ENCODE measurements at regions of chr2 and their contacts with region 1.

Region 1: DNA sequence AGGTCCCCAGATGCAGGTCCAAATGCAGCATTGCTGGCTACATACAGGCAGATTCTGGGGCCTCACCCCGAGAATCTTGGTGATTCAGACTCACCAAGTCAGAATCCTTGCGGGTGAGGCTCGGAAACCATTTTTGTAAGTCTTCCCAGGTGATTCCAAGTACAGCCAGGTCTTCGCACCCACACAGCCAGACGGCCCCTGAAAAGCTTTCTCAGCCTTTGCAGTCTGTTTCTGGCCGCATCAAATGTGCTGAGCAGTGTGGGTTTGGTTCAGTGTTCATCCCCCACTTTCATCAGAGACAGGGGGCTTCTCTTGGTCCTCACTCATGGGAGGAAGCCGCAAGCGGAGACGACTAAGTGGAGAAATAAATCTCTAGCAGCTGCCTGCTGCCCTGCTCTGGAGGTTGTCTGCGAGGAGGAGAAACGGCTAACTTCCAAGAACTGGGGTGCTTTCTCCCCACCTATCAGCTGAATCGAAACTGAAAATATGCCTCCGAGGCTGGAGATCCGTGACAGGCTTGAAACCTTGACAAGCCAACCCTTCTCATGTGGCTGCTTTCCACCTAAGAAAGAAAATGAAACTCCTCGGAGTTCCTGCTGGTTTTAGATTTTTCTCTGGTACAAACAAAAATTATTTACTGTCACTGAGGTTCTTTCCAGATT is 8.9 kb upstream of the TMEM185B start:
- DNase-seq: peak; percentile 84
- H3K4me3 Mint-ChIP-seq: peak overlapping the region; percentile 96
- H3K27ac Mint-ChIP-seq: peak overlapping the region; percentile 99
- H3K4me1 Mint-ChIP-seq: peaks cover 57% of the 10 kb centered on the region
- H3K27me3 Mint-ChIP-seq: no peaks in the 10 kb centered on the region

Region 2: DNA sequence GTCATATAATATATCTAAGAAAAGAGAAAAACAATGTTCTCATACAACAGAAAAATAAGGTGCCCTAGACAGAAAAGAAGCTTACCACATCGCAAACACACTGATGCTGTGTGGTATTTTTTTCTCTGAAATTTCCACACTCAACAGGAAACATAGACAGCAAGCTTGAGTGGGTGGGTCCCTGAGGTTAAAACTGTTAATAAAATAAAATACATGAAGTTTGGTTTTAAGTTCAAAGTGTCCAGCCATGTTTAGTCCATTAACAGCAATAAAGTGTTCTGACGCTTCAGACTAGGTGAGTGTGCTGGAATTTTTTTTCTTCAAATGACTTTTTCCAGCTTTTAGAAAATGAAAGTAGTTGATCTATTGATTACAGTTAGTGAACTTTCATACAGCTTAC is 302.6 kb before region 1 on chr2:
- CTCF ChIA-PET with region 1: no interaction called
- POLR2A ChIA-PET with region 1: interaction called, 12 read pairs
- DNase-seq: peak; percentile 46
- H3K4me3 Mint-ChIP-seq: peak overlapping the region; percentile 81
- H3K27ac Mint-ChIP-seq: peak overlapping the region; percentile 92
- H3K4me1 Mint-ChIP-seq: peaks cover 49% of the 10 kb centered on the region
- H3K27me3 Mint-ChIP-seq: no peaks in the 10 kb centered on the region

Region 3: DNA sequence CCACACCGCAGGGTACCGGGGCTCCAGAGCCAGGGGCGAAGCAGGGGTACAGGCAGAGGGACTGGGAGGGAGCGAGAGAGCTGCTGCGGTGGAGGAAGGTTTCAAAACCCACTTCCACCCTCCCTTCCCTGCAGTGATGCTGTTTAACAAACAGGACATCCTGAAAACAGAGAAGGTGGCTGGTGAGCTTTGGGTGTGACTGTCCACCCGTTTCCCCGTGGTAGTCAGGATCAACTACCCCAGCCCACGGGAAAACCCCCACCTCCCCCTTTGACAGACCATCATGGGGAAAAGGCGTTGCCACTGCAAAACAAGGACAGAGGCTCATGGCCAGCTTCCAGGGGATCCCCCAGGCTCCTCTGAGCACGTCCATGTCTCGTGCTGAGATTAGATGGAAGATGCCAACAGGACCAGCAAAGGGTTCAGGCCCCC is 21.8 kb before region 1 on chr2:
- CTCF ChIA-PET with region 1: interaction called, 3 read pairs
- POLR2A ChIA-PET with region 1: interaction called, 10 read pairs
- DNase-seq: peak; percentile 41
- H3K4me3 Mint-ChIP-seq: no peak overlapping the region
- H3K27ac Mint-ChIP-seq: peak overlapping the region; percentile 85
- H3K4me1 Mint-ChIP-seq: peaks cover 17% of the 10 kb centered on the region
- H3K27me3 Mint-ChIP-seq: no peaks in the 10 kb centered on the region

Region 4: DNA sequence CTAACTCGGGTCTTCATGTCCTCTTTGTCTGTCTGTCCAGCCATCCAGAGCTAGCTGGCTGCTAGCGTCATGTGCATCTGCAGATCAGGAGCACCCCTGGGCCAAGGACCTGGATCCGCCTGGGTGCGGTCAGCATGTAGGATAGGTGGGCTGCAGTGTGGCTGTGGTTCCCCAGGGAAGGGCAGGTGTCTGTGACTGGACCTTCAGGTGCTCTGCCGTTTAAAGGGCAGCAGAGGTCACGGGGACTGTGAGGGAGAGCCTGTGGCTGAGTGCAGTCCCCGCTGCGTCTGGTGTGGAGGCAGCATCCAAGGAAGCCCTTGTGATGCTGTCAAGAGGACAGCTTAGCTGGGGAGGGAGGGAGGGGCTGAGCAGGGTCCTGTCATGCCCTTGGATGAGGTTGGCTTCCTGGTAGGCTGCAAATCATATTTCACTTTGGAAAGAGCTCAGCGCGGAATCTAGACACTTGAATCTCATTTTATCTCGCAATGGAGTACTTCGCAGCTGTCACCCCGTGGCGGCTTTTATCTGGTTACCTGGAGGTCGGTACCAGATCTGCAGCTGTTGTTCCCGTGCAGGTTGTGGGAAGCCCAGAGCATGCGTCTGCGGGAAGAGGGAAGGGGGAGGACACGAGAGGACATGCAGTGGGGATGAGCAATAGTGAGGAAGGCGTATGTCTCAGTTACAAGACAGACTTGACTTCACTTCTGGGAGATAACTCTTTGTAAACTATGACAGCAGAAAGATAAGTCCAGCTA is 14.6 kb after region 1 on chr2:
- CTCF ChIA-PET with region 1: interaction called, 4 read pairs
- POLR2A ChIA-PET with region 1: interaction called, 45 read pairs
- DNase-seq: no peak
- H3K4me3 Mint-ChIP-seq: no peak overlapping the region
- H3K27ac Mint-ChIP-seq: no peak overlapping the region
- H3K4me1 Mint-ChIP-seq: peaks cover 20% of the 10 kb centered on the region
- H3K27me3 Mint-ChIP-seq: peaks cover 13% of the 10 kb centered on the region

Region 5: GRCh38 chr2:120252225-120253021 is 20.3 kb after region 1 on chr2 and contains the start of gene RALB:
- CTCF ChIA-PET with region 1: interaction called, 4 read pairs
- POLR2A ChIA-PET with region 1: interaction called, 45 read pairs
- DNase-seq: peak; percentile 99
- H3K4me3 Mint-ChIP-seq: peak within 1 kb of the TSS; percentile 99
- H3K27ac Mint-ChIP-seq: peak within 1 kb of the TSS; percentile 85
- H3K4me1 Mint-ChIP-seq: peaks cover 64% of the 10 kb centered on the region
- H3K27me3 Mint-ChIP-seq: peaks cover 10% of the 10 kb centered on the region
- total RNA-seq, gene RALB: 59.2 to 59.3 TPM

Region 6: GRCh38 chr2:120272763-120273481 is 40.8 kb after region 1 on chr2:
- CTCF ChIA-PET with region 1: no interaction called
- POLR2A ChIA-PET with region 1: no interaction called
- DNase-seq: no peak
- H3K4me3 Mint-ChIP-seq: no peak overlapping the region
- H3K27ac Mint-ChIP-seq: no peak overlapping the region
- H3K4me1 Mint-ChIP-seq: peaks cover 38% of the 10 kb centered on the region
- H3K27me3 Mint-ChIP-seq: no peaks in the 10 kb centered on the region

Region 7: DNA sequence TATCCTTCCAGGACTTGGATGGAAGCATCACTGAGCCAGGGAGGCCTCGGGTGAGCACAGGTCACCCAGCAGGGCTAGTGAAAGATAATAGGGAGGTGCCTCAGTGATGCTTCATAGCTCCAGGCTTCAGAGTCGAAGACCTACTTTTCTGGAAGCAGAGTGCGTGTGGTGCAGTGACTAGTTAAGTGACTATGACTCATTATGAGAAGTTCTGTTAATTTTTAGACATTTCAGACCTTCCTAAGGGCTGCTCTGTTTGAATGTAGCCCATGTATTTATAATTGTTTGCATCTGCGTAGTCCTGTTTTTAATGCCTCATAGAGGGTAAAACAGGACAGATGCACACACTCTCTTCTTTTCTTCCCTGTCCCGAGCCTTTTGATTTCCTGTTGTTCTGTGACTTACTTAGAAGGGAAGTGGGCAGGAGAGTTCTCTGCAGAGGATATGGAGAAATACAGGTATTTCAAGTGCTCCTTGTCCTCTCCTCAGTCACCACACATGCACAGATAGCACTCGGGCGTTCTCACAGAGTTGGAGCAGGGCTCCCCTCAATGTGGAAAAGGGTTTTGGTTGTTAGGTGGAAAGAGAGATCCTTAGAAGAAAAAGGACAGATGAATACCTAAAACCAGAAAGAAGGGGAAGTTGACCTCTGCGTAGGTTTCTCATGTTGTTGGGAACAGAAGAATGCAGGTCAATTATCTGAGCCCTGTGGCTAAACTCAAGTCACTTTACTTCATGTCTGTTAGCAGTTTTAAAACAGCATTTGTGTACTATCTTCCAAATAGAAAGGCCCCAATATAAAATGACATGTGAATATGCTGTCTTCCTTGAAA is 55.3 kb after region 1 on chr2:
- CTCF ChIA-PET with region 1: interaction called, 15 read pairs
- POLR2A ChIA-PET with region 1: interaction called, 25 read pairs
- DNase-seq: peak; percentile 54
- H3K4me3 Mint-ChIP-seq: peak overlapping the region; percentile 43
- H3K27ac Mint-ChIP-seq: peak overlapping the region; percentile 89
- H3K4me1 Mint-ChIP-seq: peaks cover 75% of the 10 kb centered on the region
- H3K27me3 Mint-ChIP-seq: no peaks in the 10 kb centered on the region

Region 8: DNA sequence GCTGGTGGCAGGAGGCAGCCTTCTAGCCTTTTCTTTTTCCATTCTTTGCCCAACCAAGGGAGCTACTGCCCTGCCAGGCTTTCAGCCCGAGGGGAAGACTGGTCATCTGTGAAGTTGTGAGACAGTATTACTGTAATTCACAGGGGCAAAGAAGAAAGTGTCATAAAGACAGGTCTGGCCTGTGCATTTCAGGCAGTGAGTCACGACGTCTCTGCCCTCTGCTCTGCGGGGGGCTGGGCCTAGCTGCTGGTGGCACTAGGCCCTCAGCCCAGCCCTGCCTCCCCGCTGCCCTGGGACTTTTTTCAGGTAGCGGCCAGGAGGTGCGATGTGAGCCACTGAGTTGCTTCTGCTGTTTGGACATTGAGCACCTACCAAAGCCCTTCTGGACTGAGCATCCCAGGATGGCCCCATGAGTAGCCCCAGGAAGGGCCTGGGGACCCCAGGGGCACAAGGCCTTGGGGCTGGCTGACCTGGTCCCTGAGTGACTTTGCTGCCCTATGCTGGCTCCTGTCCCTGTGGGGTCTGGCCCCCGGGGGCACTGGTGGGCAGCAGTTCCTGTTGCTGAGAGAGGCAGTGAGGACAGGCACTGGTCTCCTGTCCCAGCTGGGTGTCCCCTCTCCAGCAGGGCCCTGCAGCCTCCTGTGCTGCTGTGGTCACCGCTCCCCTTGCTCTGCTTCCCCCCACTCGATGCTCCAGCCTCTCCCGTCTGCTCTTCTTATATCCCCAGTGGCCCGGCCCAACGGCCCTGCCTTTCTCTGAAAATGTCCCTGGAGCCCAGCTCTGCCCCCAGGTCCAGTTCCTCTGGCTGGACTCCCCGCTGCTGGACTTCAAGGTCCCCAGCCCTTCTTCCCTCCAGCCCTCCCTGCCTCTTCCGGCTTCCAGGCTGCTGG is 120.8 kb after region 1 on chr2:
- CTCF ChIA-PET with region 1: no interaction called
- POLR2A ChIA-PET with region 1: no interaction called
- DNase-seq: no peak
- H3K4me3 Mint-ChIP-seq: no peak overlapping the region
- H3K27ac Mint-ChIP-seq: no peak overlapping the region
- H3K4me1 Mint-ChIP-seq: no peaks in the 10 kb centered on the region
- H3K27me3 Mint-ChIP-seq: peaks cover 31% of the 10 kb centered on the region

Measured in activated CD4-positive, alpha-beta memory T cell treated with anti-CD3 and anti-CD28 coated beads, Interleukin-2, amount 10 ng/mL, durations not matched to agents 7 days and 5 days (primary cell).